H1 (cell line): ENCODE measurements at regions of chr13 and their contacts with region 1.

Region 1: DNA sequence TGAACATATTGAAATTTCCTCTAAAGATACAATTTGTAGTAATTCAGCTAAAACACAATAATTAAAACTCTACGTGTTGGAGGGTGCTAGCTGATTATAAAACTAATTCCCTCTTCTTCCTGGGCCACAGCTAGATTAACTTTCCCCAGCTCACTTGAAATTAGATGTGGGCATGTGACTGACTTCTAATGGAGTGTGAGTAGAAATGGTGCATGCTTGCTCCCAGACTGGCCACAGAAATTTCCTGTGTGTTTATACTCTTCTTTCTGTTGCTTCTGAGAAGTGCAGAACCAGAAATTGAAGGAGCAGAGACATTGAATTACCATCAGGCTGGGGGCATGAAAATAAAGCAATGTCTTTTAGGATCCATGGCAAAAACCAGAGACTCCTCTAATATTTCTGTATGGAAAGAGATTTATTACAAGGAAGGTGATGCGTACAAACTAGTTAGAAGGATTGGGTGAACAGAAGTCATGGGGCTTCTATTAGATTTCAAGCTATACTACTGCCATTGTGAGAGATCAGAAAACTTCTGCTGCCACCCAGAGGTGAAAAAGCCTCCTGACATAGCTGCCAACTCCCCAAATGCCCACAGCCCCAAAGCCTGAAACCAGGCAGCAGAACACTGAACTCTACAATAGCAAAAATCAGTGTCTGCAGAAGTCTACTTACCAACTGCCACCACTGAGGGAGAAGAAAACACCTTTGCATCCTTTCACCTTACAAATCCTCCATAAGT is 379.2 kb upstream of the MIR17HG start:
- DNase-seq: peak; percentile 23 to 50
- H3K4me3 ChIP-seq: no peak overlapping the region
- H3K27ac ChIP-seq: no peak overlapping the region
- H3K4me1 ChIP-seq: peaks cover 0 to 3% (median 0%) of the 10 kb centered on the region in 4 experiments; a peak in 1 of 7 replicates
- H3K27me3 ChIP-seq: no peaks in the 10 kb centered on the region
- CTCF ChIP-seq: peak; percentile 47 to 66 (median 55); a peak in 3 of 4 replicates
- EP300 ChIP-seq: no peak
- POLR2A ChIP-seq: no peak
- RAD21 ChIP-seq: peak; percentile 82

Region 2: DNA sequence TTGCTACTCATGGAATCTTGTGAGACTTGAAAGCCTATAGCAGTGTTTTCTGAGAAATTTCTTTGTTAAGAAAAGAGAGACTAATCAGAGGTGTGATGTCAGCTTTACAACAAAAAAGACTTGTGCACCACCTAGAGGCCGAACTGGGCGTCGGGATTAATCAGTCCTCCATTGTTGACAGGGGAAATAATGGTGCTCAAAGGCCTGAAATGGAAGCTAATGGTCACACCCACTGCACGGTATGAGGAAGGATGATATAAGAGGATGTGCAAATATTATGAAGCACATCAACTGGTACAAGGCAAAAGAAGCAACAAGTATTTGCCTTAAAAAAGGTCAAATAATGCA is 101.0 kb before region 1 on chr13:
- CTCF ChIA-PET with region 1: interaction called, 10 read pairs
- POLR2A ChIA-PET with region 1: no interaction called
- DNase-seq: peak; percentile 39 to 80
- H3K4me3 ChIP-seq: no peak overlapping the region
- H3K27ac ChIP-seq: no peak overlapping the region
- H3K4me1 ChIP-seq: peaks cover 0 to under 1% (median 0%) of the 10 kb centered on the region in 4 experiments; a peak in 1 of 7 replicates
- H3K27me3 ChIP-seq: no peaks in the 10 kb centered on the region
- CTCF ChIP-seq: peak; percentile 53 to 80 (median 67)
- EP300 ChIP-seq: no peak
- POLR2A ChIP-seq: no peak
- RAD21 ChIP-seq: peak; percentile 87 to 91

Region 3: DNA sequence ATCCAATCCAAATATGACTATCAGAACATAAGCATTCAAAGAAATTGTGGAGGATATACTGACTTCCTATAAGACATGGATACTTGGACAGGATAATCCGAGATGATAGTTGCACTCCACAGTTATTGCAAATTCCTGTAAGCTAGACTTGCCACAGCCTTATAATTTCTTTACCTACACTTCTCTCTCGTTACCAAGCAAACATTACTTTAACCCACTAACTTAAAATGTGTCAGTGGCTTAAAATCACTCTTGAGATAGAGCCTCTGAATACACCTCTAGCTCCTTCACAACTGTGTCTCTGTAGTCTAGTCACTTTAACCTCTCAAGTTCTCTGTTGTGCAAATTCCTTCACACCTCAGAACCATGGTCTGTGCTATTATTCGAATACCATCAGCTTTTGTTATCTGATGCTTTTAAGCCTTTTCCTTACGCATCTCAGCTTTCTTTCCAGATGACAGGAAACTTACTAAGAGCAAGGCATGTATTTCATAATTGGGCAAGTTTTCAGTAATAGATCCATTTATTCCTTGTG is 95.8 kb before region 1 on chr13:
- CTCF ChIA-PET with region 1: interaction called, 10 read pairs
- POLR2A ChIA-PET with region 1: no interaction called
- DNase-seq: no peak
- H3K4me3 ChIP-seq: no peak overlapping the region
- H3K27ac ChIP-seq: no peak overlapping the region
- H3K4me1 ChIP-seq: peaks cover 0 to 2% (median 0%) of the 10 kb centered on the region in 4 experiments; a peak in 1 of 7 replicates
- H3K27me3 ChIP-seq: no peaks in the 10 kb centered on the region
- CTCF ChIP-seq: no peak
- EP300 ChIP-seq: no peak
- POLR2A ChIP-seq: no peak
- RAD21 ChIP-seq: no peak

Region 4: DNA sequence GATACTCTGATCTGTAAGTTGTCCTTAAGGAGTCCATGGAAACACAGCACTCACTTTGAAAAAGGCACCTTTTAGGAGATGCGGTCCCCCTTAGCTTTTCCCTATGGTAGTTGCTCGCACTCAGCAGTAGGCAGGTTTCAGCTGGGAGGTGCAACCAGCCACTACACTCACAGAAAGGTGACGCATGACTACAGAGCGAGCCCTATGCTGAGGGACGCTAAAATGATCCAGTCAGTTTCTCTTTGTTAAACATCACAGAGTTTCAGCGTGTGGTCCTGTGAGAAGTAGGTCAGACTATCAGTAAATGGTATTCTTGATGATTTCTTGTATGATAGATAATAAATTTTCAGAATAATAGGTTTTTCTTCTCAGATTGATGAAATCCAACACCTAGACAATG is 16.4 kb after region 1 on chr13:
- CTCF ChIA-PET with region 1: interaction called, 14 read pairs
- POLR2A ChIA-PET with region 1: no interaction called
- DNase-seq: no peak
- H3K4me3 ChIP-seq: no peak overlapping the region
- H3K27ac ChIP-seq: no peak overlapping the region
- H3K4me1 ChIP-seq: no peaks in the 10 kb centered on the region
- H3K27me3 ChIP-seq: no peaks in the 10 kb centered on the region
- CTCF ChIP-seq: no peak
- EP300 ChIP-seq: no peak
- POLR2A ChIP-seq: no peak
- RAD21 ChIP-seq: no peak